ENCODE measurements at regions of chr4 and their contacts with region 1.

Region 1: DNA sequence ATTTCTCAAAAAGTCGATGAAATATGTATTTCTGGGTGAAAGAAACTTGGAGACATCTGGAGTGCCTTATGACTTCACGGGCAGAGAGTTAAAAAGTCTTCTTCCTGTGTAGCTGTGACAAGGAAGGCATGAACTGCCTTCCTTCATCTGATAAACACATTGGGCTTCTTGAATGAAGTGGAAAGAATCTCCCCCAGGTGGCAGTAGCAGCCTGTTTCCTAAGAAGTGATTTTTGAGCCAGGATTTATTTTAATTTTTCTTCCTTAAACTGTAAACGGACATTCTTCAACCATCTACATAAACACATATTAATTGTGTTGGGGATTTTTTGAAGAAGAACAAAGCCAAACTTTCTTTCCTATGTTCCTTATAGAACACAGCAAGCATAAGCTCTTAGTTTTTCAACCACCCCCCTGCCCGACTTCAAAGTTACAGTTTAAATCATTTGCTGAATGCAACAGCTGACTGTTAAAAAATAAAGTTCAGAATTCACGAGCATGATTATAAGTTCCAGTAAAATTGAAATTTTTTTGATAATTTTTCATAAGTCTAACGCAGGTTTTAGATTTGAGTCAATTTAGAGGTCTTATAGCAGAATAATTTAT is 980 bp upstream of the GIMD1 start:
- DNase-seq: no peak
- ATAC-seq: peak in 1 of 4 donors; percentile 59
- H3K4me3 ChIP-seq: no peak overlapping the region
- H3K27ac ChIP-seq: no peak overlapping the region
- H3K4me1 ChIP-seq: peaks cover 9% of the 10 kb centered on the region
- H3K27me3 ChIP-seq: no peaks in the 10 kb centered on the region
- CTCF ChIP-seq: peak; percentile 62

Region 2: GRCh38 chr4:106502106-106502699 is 132.6 kb after region 1 on chr4:
- intact Hi-C with region 1: loop called in 1 of 2 experiments (anchors 5 kb)
- DNase-seq: peak; percentile 23 to 55
- ATAC-seq: peak; percentile 28 to 61 (median 50)
- H3K4me3 ChIP-seq: no peak overlapping the region
- H3K27ac ChIP-seq: no peak overlapping the region
- H3K4me1 ChIP-seq: no peaks in the 10 kb centered on the region
- H3K27me3 ChIP-seq: peaks cover 0 to 2% (median 0%) of the 10 kb centered on the region in 3 donors
- CTCF ChIP-seq: peak; percentile 62

Region 3: GRCh38 chr4:106809076-106809475 is 439.5 kb after region 1 on chr4:
- intact Hi-C with region 1: loop called in 1 of 2 experiments (anchors 5 kb)
- DNase-seq: no peak
- ATAC-seq: no peak
- H3K4me3 ChIP-seq: no peak overlapping the region
- H3K27ac ChIP-seq: no peak overlapping the region
- H3K4me1 ChIP-seq: no peaks in the 10 kb centered on the region
- H3K27me3 ChIP-seq: no peaks in the 10 kb centered on the region
- CTCF ChIP-seq: no peak

Region 4: GRCh38 chr4:106898621-106899230 is 529.2 kb after region 1 on chr4:
- intact Hi-C with region 1: loop called in 1 of 2 experiments (anchors 10 kb)
- DNase-seq: no peak
- ATAC-seq: no peak
- H3K4me3 ChIP-seq: no peak overlapping the region
- H3K27ac ChIP-seq: no peak overlapping the region
- H3K4me1 ChIP-seq: no peaks in the 10 kb centered on the region
- H3K27me3 ChIP-seq: no peaks in the 10 kb centered on the region
- CTCF ChIP-seq: peak; percentile 51

Measured in psoas muscle (tissue), 8 donors.